Right ventricle myocardium inferior (tissue), 1 donor: ENCODE measurements at regions of chr6 and their contacts with region 1.

Region 1: GRCh38 chr6:108655806-108656651 is 95.3 kb downstream of the FOXO3 start:
- DNase-seq: no peak
- ATAC-seq: peak; percentile 60

Region 2: GRCh38 chr6:108464418-108465093 is 191.5 kb before region 1 on chr6:
- intact Hi-C with region 1: no loop called
- DNase-seq: no peak
- ATAC-seq: no peak

Region 3: DNA sequence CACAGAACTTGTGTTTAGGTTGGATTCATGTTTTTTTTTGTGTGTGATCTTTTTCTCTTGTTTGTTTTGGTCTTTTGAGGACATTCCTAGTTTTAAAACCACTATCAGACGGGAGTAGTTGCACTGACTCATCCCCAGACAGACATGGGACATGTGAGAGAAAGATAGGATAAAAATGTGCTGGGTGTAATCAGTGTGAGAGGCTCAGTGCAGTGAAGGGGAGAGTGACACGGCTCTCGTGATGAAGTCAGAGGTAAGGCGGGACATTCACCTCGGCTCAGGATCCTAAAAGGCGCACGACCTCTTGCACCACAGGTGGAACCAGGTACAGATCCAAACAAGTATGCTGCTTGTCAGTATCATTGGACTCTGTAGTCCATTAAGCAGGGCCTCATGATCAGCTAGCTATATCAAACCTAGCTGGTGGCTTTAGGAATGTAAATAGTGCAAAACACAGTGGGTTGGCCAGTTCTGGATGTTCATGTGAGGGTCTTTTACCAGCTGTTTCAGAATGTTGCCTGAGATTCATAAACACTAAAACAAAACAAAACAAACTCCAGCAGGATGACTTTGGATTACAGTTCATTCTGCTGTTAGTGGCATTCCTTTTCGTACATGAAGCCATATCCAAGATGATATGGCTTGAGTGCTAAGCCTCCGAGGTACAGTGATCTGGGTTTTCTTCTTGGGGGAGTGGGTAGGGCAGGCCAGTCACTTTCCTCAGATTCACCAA is 77.3 kb before region 1 on chr6:
- intact Hi-C with region 1: no loop called
- DNase-seq: no peak
- ATAC-seq: peak; percentile 44

Region 4: DNA sequence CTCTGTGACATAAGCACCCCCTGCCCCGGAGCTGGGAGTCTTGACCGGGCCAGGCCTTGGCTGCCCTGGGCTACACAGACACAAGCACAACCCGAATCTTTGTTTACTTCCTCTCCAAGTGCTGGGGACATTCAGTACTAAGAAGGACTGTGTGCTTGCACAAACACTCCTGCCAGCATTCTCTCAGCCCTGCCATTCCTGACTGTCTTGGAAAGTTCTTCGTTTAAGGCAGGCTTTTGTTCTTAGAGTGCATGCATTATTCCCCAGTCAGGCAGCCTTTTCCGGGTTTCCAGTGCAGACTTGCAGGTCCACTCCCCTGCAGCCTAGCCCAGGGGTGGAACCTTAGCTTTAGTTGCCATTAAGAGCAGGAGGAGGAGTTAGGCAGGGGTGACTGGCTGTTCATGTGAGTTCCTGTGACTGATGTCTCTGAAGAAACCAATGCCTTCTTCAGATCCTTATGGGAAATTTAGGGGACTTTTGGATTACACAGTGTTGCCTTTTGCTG is 66.7 kb before region 1 on chr6:
- intact Hi-C with region 1: loop called (anchors 1 kb)
- DNase-seq: peak; percentile 90
- ATAC-seq: peak; percentile 93

Region 5: DNA sequence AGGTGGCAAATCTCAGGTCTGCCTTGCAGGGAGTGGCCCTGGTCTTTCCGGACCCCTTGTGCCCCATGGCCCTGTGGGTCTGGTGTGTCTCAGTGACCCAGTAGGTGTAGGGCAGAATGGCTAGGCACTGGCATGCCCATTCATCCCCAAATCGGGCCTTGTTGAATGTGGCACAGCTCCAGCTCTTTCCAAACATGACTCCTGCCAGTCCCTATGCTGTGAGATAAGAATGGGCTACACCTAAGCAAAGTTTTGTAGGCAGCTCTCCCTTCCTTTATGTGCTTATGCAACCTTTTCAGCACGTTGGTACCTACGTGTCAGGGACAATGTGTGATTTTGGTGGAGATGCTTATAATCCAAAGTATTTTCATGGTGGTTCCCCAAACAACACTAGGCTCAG is 61.4 kb before region 1 on chr6:
- intact Hi-C with region 1: loop called (anchors 1 kb)
- DNase-seq: no peak
- ATAC-seq: peak; percentile 26

Region 6: GRCh38 chr6:108632441-108632840 is 23.6 kb before region 1 on chr6:
- intact Hi-C with region 1: loop called (anchors 2 kb)
- DNase-seq: no peak
- ATAC-seq: no peak

Region 7: DNA sequence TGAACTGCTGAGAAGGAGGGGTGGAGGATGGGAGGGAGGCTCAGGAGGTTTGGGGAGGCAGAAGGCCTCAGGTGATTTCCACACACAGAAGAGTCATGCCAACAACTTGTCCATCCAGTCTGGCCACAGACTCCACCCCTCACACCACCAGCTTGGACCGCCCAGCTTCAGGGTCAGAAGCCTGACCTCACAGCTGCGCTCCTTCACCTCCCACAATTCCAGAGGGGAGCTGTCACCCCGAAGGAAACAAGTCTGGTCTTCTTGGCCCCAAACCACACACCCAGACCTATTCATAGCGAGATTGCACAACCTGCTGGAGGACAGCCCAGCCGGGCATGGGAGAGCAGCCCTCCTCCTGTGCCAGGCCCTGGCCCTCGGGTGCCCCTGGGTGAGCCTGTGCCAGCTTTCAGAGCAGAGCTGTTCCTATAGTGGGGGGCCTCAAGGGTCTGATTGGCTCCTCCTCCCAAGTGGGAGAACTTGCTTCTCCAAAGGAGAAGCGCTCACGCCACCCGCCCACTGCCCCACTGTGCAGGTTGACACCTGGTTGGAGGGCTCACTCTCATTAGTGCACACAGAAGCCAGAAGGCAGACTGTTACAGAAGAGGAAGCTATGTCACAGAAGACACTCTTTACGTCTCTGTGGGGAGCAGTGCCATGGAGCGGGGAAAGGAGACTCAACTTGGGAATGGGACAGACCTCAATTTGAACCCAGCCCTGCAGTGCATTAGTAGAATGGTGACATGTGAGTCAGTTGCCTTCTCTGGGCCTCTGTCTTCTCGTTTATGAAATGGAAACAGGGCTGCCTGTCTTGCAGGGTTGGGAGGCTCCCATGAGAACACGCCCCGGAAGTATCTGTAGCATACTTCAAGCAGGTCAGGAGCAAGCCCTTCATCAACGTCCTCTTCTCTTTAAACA is 33.5 kb after region 1 on chr6:
- intact Hi-C with region 1: loop called (anchors 5 kb)
- DNase-seq: peak; percentile 92
- ATAC-seq: peak; percentile 89